ENCODE measurements at regions of chr3 and their contacts with region 1.

Region 1: DNA sequence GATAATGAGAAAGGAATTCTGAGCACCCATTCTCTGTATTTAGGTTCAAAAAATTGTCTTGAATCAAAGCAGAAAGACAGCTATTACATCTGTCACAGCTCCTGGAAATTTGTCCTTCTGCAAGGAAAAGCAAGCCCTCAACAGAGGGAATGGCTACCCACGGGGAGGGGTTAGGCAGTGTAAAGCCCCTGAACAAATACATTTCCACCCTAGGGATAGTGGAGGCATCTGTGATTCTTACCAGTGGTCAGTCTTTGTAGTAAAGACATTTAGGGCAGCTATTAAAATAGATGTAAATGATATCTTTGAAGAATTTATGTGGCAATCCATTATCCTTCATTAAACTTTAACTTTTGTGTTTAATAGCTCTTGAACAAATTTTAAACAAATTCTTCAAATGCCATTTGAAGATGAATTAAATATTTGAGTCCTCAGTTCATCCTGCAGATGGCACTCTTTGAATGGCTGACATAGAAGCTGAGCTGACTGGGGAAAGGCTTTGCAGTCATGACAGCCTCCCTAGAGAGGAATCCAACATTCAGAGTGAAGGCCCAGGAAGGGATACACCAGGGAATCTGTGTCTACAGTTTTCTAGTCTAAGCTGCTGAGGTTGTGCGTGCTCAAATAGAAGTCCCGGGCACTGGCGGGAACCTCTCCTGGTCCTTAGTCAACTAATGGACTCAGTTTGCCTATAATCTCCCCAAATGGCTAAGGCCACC is 359.7 kb upstream of the ROPN1 start:
- DNase-seq: peak; percentile 47
- H3K4me3 ChIP-seq: no peak overlapping the region
- CTCF ChIP-seq: peak; percentile 56

Region 2: GRCh38 chr3:124032648-124033359 is 318.8 kb before region 1 on chr3:
- CTCF ChIA-PET with region 1: interaction called, 13 read pairs
- POLR2A ChIA-PET with region 1: no interaction called
- DNase-seq: peak; percentile 17
- H3K4me3 ChIP-seq: peak overlapping the region; percentile 90
- CTCF ChIP-seq: peak; percentile 93

Region 3: DNA sequence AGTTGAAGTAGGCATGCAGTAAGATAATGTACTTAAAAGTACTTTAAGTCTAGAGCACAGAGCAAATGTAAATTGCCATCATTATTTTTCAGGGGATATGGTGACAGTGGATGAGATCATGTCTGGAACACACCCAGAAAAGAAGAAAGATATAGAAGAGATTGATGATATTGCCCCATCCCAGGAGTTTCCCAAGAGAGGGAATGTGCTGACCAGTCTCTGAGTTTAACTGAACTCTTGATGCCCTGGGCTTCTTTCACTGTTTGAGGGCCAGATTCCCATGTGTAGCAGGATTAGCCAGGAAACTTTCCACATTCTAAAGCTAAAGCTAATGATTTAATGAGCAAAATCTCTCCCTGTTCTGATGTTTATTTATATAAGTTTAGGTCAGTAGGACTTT is 11.9 kb after region 1 on chr3:
- CTCF ChIA-PET with region 1: interaction called, 40 read pairs
- POLR2A ChIA-PET with region 1: no interaction called
- DNase-seq: peak; percentile 68
- H3K4me3 ChIP-seq: no peak overlapping the region
- CTCF ChIP-seq: no peak

Region 4: GRCh38 chr3:124429129-124429815 is 77.7 kb after region 1 on chr3:
- CTCF ChIA-PET with region 1: interaction called, 19 read pairs
- POLR2A ChIA-PET with region 1: no interaction called
- DNase-seq: no peak
- H3K4me3 ChIP-seq: no peak overlapping the region
- CTCF ChIP-seq: no peak

Region 5: GRCh38 chr3:124467980-124468902 is 116.7 kb after region 1 on chr3:
- CTCF ChIA-PET with region 1: interaction called, 388 read pairs
- POLR2A ChIA-PET with region 1: interaction called, 3 read pairs
- DNase-seq: no peak
- H3K4me3 ChIP-seq: no peak overlapping the region
- CTCF ChIP-seq: peak; percentile 99

Measured in AG04449 (cell line).